GM12878 (cell line): ENCODE measurements at regions of chr19 and their contacts with region 1.

Region 1: GRCh38 chr19:1672038-1672768 is 19.8 kb upstream of the TCF3 start:
- DNase-seq: no peak
- ATAC-seq: peak; percentile 68
- H3K4me3 ChIP-seq: peak overlapping the region; percentile 55; the same call in 1 of the 2 replicates
- H3K27ac ChIP-seq: no peak overlapping the region
- H3K4me1 ChIP-seq: peaks cover 18% of the 10 kb centered on the region
- H3K27me3 ChIP-seq: no peaks in the 10 kb centered on the region
- CTCF ChIP-seq: peak; percentile 68 to 76 (median 73)
- EP300 ChIP-seq: no peak
- POLR2A ChIP-seq: no peak
- RAD21 ChIP-seq: peak; percentile 80

Region 2: GRCh38 chr19:1445185-1445931 is 226.8 kb before region 1 on chr19:
- CTCF ChIA-PET with region 1: no interaction called
- POLR2A ChIA-PET with region 1: no interaction called
- RAD21 ChIA-PET with region 1: no interaction called
- SMC1A ChIA-PET with region 1: no interaction called
- in situ Hi-C with region 1: no loop called
- intact Hi-C with region 1: no loop called
- DNase-seq: no peak
- ATAC-seq: peak; percentile 94
- H3K4me3 ChIP-seq: peak overlapping the region; percentile 47
- H3K27ac ChIP-seq: no peak overlapping the region
- H3K4me1 ChIP-seq: peaks cover 7% of the 10 kb centered on the region
- H3K27me3 ChIP-seq: peaks cover 4 to 9% of the 10 kb centered on the region in 2 experiments; a peak in 3 of 4 replicates
- CTCF ChIP-seq: peak; percentile 82 to 94 (median 94)
- EP300 ChIP-seq: no peak
- POLR2A ChIP-seq: no peak; the same call in 1 of the 2 replicates
- RAD21 ChIP-seq: peak; percentile 55

Region 3: DNA sequence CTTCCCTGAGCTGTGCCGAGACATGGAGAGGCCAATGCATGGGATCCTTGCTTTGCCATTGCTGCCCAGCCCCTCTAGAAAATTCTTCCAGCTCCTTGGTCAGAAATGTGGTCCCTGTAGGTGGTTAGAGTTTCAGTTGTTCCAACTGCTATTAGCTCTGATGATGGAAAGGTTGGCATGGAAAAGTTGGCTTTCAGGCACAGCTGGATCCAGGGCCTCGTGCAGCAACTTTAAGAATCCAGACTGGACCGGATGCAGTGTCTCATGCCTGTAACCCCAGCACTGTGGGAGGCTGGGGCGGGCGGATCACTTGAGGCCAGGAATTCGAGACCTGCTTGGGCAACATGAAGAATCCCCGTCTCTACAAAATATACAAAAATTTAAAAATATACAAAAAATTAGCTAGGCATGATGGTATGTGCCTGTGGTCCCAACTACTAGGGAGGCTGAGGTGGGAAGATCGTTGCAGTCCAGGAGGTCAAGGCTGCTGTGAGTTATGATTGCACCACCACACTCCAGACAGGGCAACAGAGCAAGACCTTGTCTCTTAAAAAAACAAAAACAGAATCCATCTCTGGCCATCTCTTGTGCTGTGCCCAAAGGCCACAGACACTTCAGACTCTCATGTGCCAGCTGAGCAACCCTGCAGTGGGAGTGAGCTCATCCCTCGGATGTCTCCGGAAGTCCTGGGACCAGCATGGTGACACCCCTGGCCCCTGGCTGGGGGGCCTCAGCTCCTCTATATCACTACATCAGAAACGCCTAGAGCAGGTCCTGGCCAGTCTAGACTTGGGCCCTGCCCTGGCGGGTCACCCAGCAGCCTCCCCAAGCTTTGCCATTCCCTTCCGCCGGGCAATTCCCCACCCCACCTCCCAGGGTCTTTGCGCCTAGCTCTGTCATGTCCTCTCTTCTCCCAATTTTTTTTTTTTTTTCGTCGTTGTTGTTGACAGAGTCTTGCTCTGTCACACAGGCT is 120.8 kb before region 1 on chr19:
- CTCF ChIA-PET with region 1: interaction called, 26 read pairs
- POLR2A ChIA-PET with region 1: interaction called, 8 read pairs
- RAD21 ChIA-PET with region 1: interaction called, 21 read pairs
- SMC1A ChIA-PET with region 1: interaction called, 5 read pairs
- in situ Hi-C with region 1: no loop called
- intact Hi-C with region 1: loop called (anchors 2 kb)
- DNase-seq: no peak
- ATAC-seq: no peak
- H3K4me3 ChIP-seq: no peak overlapping the region
- H3K27ac ChIP-seq: no peak overlapping the region
- H3K4me1 ChIP-seq: no peaks in the 10 kb centered on the region
- H3K27me3 ChIP-seq: no peaks in the 10 kb centered on the region
- CTCF ChIP-seq: no peak
- EP300 ChIP-seq: no peak
- POLR2A ChIP-seq: no peak
- RAD21 ChIP-seq: no peak

Region 4: DNA sequence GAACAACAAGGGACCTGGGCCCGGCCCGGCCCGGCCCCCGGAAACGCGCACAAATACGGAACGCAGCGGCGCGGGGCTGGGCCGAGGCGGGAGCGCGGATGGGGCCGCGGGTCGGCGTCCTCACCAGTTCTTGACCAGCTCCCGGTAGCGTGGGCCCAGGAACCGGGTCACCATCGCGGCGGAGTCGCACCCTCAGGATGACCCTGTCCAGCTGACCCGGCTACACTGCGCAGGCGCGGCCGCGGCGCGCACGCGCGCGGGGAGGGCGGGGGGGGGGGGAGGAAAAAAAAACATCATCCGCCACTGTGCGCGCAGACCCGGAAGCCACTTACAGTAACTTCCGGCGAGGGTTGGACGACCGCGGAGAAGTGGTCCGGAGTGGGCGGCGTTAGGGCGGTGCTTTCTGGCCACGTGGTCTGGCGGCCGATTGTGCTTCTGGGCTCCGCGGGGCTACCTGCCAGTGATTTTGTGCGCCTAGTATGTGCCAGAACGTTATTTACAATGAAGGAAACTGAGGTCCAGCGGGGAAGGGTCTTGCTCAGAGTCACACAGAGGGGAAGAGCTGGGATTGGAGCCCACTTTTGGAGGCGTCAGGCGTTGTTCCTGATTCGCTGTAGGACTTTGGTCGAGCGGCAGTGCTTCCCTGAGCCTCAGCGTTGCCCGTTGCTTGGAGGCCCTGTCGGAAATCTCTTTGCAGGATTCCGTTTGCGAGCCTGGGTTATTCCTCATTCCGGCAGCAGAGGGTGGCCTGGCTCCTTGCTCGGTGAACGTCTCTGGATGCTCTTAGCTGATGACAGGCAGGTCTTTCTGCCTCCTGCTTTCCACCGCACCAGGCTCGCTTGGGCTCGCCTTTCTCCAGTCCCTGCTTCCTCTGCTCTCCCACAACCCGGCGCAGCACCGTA is 66.7 kb before region 1 on chr19 and contains the start of gene UQCR11:
- CTCF ChIA-PET with region 1: interaction called, 8 read pairs
- POLR2A ChIA-PET with region 1: interaction called, 3 read pairs
- RAD21 ChIA-PET with region 1: interaction called, 6 read pairs
- SMC1A ChIA-PET with region 1: interaction called, 3 read pairs
- in situ Hi-C with region 1: no loop called
- intact Hi-C with region 1: loop called (anchors 5 kb)
- DNase-seq: peak; percentile 80
- ATAC-seq: peak; percentile 96
- H3K4me3 ChIP-seq: peak within 1 kb of the TSS; percentile 91
- H3K27ac ChIP-seq: peak within 1 kb of the TSS; percentile 83
- H3K4me1 ChIP-seq: peaks cover 9% of the 10 kb centered on the region
- H3K27me3 ChIP-seq: no peaks in the 10 kb centered on the region
- CTCF ChIP-seq: peak; percentile 70 to 87 (median 76)
- EP300 ChIP-seq: no peak
- POLR2A ChIP-seq: peak; percentile 69
- RAD21 ChIP-seq: peak; percentile 74
- polyA plus RNA-seq, gene UQCR11: 166 to 418 TPM

Region 5: DNA sequence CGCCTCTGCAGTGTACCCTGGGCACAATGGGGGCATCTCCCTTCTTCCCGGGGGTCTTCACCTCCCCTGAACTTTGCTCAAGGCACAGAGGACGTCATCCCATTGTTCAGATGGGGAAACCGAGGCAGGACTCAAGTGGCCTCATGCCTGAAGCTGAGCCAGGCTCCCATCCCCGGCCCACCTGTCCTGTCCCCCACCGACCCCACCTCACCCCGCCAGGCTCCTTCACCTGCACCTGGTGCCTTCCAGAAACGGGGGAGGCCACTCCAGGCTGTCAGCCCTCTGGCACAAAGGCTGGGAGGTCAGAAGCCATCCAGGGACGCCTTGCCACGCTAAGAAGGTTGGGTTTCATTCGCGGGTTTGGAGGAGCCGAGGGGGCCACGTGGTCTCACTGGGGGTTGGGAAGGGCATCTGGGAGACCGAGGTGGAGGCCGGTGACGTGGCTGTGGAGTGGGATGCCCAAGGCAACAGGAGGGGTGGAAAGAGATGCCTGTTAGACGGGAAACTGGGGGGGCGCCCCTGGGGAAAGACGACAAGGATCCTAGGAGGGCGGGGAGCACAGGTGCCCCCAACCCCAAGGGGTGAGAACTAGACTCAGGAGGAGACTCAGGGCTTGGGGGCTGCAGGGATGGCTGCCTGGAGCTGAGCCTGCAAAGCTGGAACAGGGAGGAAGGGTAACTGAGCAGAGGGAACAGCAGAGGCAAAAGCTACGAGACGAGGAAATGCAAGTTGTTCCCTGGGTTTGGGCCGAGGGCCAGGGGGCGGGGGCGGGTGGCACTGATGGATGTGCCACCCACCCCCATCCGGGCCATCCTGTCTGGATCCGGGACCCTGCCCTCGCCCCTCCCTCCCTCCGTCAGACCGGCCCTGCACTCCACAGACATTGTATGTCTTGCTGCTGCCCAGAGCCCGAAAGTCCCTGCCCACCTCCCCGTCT is 13.8 kb before region 1 on chr19:
- CTCF ChIA-PET with region 1: interaction called, 25 read pairs
- POLR2A ChIA-PET with region 1: interaction called, 5 read pairs
- RAD21 ChIA-PET with region 1: interaction called, 6 read pairs
- SMC1A ChIA-PET with region 1: no interaction called
- in situ Hi-C with region 1: no loop called
- intact Hi-C with region 1: no loop called
- DNase-seq: no peak
- ATAC-seq: no peak
- H3K4me3 ChIP-seq: no peak overlapping the region
- H3K27ac ChIP-seq: no peak overlapping the region
- H3K4me1 ChIP-seq: peaks cover 21% of the 10 kb centered on the region
- H3K27me3 ChIP-seq: no peaks in the 10 kb centered on the region
- CTCF ChIP-seq: no peak
- EP300 ChIP-seq: no peak
- POLR2A ChIP-seq: no peak
- RAD21 ChIP-seq: no peak